Activated naive CD8-positive, alpha-beta T cell treated with anti-CD3 and anti-CD28 coated beads, Interleukin-2, amount 10 ng/mL, durations not matched to agents 7 days and 5 days (primary cell): ENCODE measurements at regions of chr14 and their contacts with region 1.

Region 1: DNA sequence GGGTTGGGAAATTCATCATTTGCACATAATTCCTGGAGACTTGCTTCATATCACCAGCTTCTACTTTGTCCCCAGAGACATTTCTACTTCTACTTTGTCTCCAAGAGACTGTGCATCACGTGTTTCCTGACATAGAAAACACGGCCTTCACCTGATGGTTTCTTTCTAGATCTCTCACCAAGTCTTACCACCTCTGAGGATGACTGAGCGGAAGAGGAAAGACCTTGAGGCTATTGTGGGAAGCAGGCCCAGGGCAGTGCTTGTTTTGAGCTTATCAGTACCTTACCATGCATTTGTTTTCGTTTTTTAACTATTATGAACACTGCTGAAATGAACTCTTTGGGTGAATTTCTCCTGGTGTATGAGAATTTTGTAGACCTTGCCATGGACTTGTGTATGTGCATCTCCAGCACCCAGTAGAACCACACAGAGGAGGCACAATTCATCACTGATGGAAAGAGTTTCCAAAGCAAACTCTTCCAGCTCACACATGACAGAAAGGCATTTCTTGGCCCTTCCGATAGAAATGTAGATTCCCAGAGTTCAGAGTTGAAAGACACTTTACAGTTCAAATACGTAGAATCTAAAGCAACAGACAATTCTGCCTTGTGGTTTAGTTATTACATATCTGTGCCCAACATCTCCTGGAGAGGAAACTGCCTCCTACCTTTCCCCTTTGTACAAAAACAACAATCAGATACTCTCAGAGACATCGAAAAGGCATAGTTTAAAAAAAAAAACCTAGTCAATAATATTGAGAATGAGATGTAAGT is 434.7 kb downstream of the FUT8 start:
- DNase-seq: peak; percentile 63
- ATAC-seq: peak; percentile 77
- H3K4me3 Mint-ChIP-seq: peak overlapping the region; percentile 75
- H3K27ac Mint-ChIP-seq: peak overlapping the region; percentile 94
- H3K4me1 Mint-ChIP-seq: peaks cover 66% of the 10 kb centered on the region
- H3K27me3 Mint-ChIP-seq: no peaks in the 10 kb centered on the region

Region 2: GRCh38 chr14:65832431-65833266 is 14.6 kb before region 1 on chr14:
- POLR2A ChIA-PET with region 1: interaction called, 12 read pairs
- DNase-seq: no peak
- ATAC-seq: peak; percentile 14
- H3K4me3 Mint-ChIP-seq: no peak overlapping the region
- H3K27ac Mint-ChIP-seq: peak overlapping the region; percentile 40
- H3K4me1 Mint-ChIP-seq: peaks cover 25% of the 10 kb centered on the region
- H3K27me3 Mint-ChIP-seq: no peaks in the 10 kb centered on the region

Region 3: GRCh38 chr14:65860956-65861611 is 13.8 kb after region 1 on chr14:
- POLR2A ChIA-PET with region 1: interaction called, 41 read pairs
- DNase-seq: peak; percentile 71
- ATAC-seq: peak; percentile 90
- H3K4me3 Mint-ChIP-seq: peak overlapping the region; percentile 36
- H3K27ac Mint-ChIP-seq: peak overlapping the region; percentile 86
- H3K4me1 Mint-ChIP-seq: peaks cover 56% of the 10 kb centered on the region
- H3K27me3 Mint-ChIP-seq: no peaks in the 10 kb centered on the region

Region 4: GRCh38 chr14:65866886-65867285 is 19.6 kb after region 1 on chr14:
- POLR2A ChIA-PET with region 1: interaction called, 41 read pairs
- DNase-seq: no peak
- ATAC-seq: no peak
- H3K4me3 Mint-ChIP-seq: no peak overlapping the region
- H3K27ac Mint-ChIP-seq: no peak overlapping the region
- H3K4me1 Mint-ChIP-seq: peaks cover 38% of the 10 kb centered on the region
- H3K27me3 Mint-ChIP-seq: no peaks in the 10 kb centered on the region

Region 5: DNA sequence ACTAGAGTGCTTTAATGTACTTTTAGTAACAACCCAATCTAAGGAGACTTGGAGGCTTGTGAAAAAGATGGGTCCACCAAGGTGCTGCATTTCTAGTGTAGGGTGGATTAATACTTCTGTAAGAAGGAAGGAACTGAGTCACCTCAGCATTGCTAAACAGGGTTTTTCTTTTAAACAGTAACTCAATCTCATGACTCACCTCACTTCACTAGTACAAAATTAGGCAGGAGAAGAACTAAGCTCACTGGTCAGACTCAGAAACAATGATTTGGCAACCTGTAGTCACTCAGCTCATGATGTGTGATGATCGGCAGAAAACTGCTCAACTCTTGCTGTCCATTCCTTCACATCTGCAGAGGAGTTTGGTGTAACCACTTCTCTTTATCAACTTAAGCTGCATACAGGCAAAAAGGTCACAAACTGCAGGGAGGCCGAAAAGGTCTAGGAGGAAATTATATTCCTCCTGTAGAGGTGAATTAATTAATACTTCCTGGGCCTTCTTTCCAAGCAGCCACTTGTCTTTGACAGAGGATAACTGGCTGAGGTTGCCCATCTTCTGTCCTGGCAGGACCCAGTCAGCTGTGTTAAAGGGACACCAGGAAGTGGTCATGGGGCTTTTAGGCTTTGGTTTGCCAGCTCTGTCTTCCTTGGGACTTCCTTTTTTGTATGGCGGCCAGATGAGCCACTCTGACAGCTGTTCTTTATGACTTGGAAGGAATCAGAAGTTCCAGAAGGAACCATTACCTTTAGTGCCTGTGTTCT is 32.2 kb after region 1 on chr14:
- POLR2A ChIA-PET with region 1: interaction called, 20 read pairs
- DNase-seq: no peak
- ATAC-seq: peak; percentile 71
- H3K4me3 Mint-ChIP-seq: peak overlapping the region; percentile 31
- H3K27ac Mint-ChIP-seq: peak overlapping the region; percentile 84
- H3K4me1 Mint-ChIP-seq: peaks cover 23% of the 10 kb centered on the region
- H3K27me3 Mint-ChIP-seq: no peaks in the 10 kb centered on the region